Activated CD4-positive, alpha-beta T cell treated with anti-CD3 and anti-CD28 coated beads for 36 hours (primary cell): ENCODE measurements at regions of chr19 and their contacts with region 1.

Region 1: GRCh38 chr19:11505032-11505503 is 571 bp downstream of the ZNF653 start:
- DNase-seq: peak; percentile 98
- ATAC-seq: peak; percentile 95
- H3K4me3 Mint-ChIP-seq: peak overlapping the region; percentile 83
- H3K27ac Mint-ChIP-seq: peak overlapping the region; percentile 87
- H3K4me1 Mint-ChIP-seq: peaks cover 12% of the 10 kb centered on the region
- H3K27me3 Mint-ChIP-seq: no peaks in the 10 kb centered on the region

Region 2: GRCh38 chr19:10870955-10871603 is 634.0 kb before region 1 on chr19 and contains the start of gene CARM1:
- CTCF ChIA-PET with region 1: no interaction called
- POLR2A ChIA-PET with region 1: no interaction called
- intact Hi-C with region 1: loop called in 1 of 2 experiments (anchors 1 kb)
- DNase-seq: peak; percentile 100
- ATAC-seq: peak; percentile 88
- H3K4me3 Mint-ChIP-seq: peak within 1 kb of the TSS; percentile 80
- H3K27ac Mint-ChIP-seq: peak within 1 kb of the TSS; percentile 97
- H3K4me1 Mint-ChIP-seq: peaks cover 28% of the 10 kb centered on the region
- H3K27me3 Mint-ChIP-seq: no peaks in the 10 kb centered on the region
- total RNA-seq, gene CARM1: 82.3 to 96.8 TPM

Region 3: DNA sequence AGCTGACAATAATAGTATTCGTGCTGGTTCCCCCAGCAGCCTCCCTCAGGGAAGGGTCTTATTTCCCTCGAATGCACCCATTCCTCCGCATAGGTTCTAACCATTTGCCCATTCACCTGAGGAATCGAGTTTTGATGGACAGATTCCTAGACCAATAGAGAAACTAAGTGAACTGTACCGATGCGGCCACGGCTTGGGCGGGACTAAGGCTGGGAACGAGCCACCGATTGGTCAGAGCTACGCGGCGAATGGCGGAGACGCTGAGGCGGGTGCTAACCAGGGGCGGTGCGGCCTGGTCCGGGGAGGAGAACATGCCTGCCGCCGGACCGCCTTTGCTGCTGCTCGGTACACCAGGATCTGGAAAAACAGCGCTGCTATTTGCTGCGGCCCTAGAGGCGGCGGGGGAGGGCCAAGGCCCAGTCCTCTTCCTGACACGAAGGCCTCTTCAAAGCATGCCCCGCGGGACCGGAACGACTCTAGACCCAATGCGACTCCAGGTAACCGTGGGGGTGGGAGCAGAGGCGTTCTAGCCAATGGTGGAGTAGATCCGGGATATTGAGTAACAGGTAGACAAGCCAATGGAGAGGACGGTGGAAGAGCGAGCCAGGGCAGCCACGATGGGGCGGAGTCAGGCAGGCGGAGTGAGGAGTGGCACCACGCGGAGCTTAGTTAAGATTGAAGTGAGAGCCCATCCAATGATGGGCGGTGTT is 130.5 kb before region 1 on chr19 and contains the start of gene SWSAP1:
- CTCF ChIA-PET with region 1: no interaction called
- POLR2A ChIA-PET with region 1: no interaction called
- intact Hi-C with region 1: loop called (anchors 1 kb)
- DNase-seq: peak; percentile 98
- ATAC-seq: peak; percentile 92
- H3K4me3 Mint-ChIP-seq: no peak within 1 kb of the TSS
- H3K27ac Mint-ChIP-seq: no peak within 1 kb of the TSS
- H3K4me1 Mint-ChIP-seq: peaks cover 28% of the 10 kb centered on the region
- H3K27me3 Mint-ChIP-seq: no peaks in the 10 kb centered on the region
- total RNA-seq, gene SWSAP1: 1.5 to 1.7 TPM

Region 4: DNA sequence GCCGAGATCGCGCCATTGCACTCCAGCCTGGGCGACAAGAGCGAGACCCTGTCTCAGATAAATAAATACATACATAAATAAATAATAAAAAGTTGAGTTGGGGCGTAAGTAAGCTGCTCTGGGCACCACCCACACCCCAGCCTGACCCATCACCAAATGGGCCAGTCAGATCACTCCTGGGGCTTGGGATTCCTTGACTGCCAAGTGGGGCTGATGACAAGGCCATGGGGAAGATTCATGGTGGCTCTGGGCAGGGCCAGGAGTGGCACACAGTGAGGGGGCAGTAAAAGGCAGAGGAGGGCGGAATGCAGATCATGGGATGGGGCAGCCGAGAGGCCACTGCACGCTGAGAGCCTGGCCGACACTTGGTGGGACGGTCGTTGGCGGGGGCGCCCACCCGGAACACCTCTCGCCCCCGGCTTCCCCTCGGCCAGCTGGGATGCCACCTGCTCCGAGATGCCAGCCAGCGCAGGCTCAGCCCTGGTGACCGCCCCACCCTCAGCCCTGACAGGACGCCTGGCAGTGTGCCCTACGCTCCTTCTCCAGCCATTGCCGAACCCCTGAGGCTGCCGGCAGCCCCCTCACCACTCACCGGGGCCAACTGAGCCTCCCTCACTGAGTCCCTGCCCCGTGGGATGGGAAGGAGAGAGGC is 10.3 kb before region 1 on chr19:
- CTCF ChIA-PET with region 1: no interaction called
- POLR2A ChIA-PET with region 1: no interaction called
- intact Hi-C with region 1: no loop called
- DNase-seq: no peak
- ATAC-seq: no peak
- H3K4me3 Mint-ChIP-seq: no peak overlapping the region
- H3K27ac Mint-ChIP-seq: no peak overlapping the region
- H3K4me1 Mint-ChIP-seq: no peaks in the 10 kb centered on the region
- H3K27me3 Mint-ChIP-seq: no peaks in the 10 kb centered on the region

Region 5: GRCh38 chr19:11528551-11529341 is 23.7 kb after region 1 on chr19 and contains the start of gene ECSIT:
- CTCF ChIA-PET with region 1: no interaction called
- POLR2A ChIA-PET with region 1: no interaction called
- intact Hi-C with region 1: loop called (anchors 1 to 2 kb)
- DNase-seq: peak; percentile 97
- ATAC-seq: peak; percentile 97
- H3K4me3 Mint-ChIP-seq: peak within 1 kb of the TSS; percentile 99
- H3K27ac Mint-ChIP-seq: peak within 1 kb of the TSS; percentile 96
- H3K4me1 Mint-ChIP-seq: peaks cover 28% of the 10 kb centered on the region
- H3K27me3 Mint-ChIP-seq: no peaks in the 10 kb centered on the region
- total RNA-seq, gene ECSIT: 37.2 to 44.6 TPM

Region 6: GRCh38 chr19:11587302-11587974 is 82.4 kb after region 1 on chr19:
- CTCF ChIA-PET with region 1: no interaction called
- POLR2A ChIA-PET with region 1: no interaction called
- intact Hi-C with region 1: loop called in 1 of 2 experiments (anchors 2 kb)
- DNase-seq: peak; percentile 89
- ATAC-seq: peak; percentile 96
- H3K4me3 Mint-ChIP-seq: no peak overlapping the region
- H3K27ac Mint-ChIP-seq: no peak overlapping the region
- H3K4me1 Mint-ChIP-seq: peaks cover 3% of the 10 kb centered on the region
- H3K27me3 Mint-ChIP-seq: no peaks in the 10 kb centered on the region

Region 7: DNA sequence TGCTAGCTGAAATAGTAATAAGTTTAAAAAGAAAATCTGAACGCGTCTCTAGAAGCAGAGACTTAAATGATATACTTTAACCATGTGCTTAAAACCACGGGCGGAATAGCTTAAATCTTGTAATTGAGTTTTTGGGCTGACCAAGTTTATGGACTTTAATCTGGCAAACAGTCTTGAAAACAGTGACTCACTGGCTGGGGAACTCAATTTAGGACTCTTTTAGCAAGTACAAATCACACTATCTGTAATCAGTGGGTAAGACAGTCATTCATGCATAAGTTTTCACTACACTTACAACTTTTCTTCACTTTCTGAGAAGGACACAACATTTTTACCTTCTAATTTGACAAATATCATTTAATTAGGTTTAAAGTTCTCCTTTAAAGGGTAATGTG is 119.0 kb after region 1 on chr19:
- CTCF ChIA-PET with region 1: no interaction called
- POLR2A ChIA-PET with region 1: no interaction called
- intact Hi-C with region 1: no loop called
- DNase-seq: no peak
- ATAC-seq: peak; percentile 56
- H3K4me3 Mint-ChIP-seq: no peak overlapping the region
- H3K27ac Mint-ChIP-seq: no peak overlapping the region
- H3K4me1 Mint-ChIP-seq: peaks cover 16% of the 10 kb centered on the region
- H3K27me3 Mint-ChIP-seq: peaks cover 14% of the 10 kb centered on the region

Region 8: DNA sequence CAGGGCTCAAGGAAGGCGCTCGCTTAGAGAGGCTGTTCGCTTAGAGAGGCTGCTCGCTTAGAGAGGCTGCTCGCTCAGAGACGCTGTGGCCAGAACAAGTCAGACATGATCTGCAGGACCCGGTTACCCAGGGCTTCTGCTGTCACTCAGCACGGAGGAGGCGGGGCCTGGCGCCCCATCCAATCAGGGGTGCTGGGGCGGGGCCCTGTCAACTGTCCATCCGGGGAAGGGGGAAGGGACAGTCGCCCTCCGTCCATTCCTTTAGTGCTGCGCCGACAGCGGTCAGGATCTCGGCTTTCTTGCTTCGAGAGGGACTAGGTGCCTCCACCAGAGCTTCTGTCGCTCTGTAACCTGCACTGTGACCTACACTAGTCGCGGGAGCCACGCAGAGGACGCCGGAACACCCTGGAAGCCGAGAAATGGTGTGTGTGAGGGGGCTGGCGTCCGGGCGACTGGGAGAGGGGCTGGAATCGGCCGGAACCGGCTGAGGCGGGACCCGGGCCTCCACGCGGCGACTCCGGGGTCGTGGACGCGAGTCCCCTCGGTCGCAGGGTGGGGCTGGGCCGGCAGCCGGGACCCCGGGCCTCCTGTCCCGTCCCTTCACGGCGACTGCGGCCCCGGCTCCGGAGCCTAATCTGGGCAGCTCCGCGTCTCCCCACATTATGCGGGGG is 309.1 kb after region 1 on chr19 and contains the start of gene ZNF440:
- CTCF ChIA-PET with region 1: no interaction called
- POLR2A ChIA-PET with region 1: no interaction called
- intact Hi-C with region 1: loop called in 1 of 2 experiments (anchors 1 kb)
- DNase-seq: peak; percentile 95
- ATAC-seq: peak; percentile 100
- H3K4me3 Mint-ChIP-seq: peak within 1 kb of the TSS; percentile 89
- H3K27ac Mint-ChIP-seq: peak within 1 kb of the TSS; percentile 73
- H3K4me1 Mint-ChIP-seq: peaks cover 20% of the 10 kb centered on the region
- H3K27me3 Mint-ChIP-seq: no peaks in the 10 kb centered on the region
- total RNA-seq, gene ZNF440: 7.0 to 7.7 TPM